AG04450 (cell line): ENCODE measurements at regions of chr2 and their contacts with region 1.

Region 1: GRCh38 chr2:119659601-119660342 is 19.2 kb upstream of the TMEM177 start:
- DNase-seq: no peak
- H3K4me3 ChIP-seq: no peak overlapping the region
- H3K27ac ChIP-seq: no peak overlapping the region
- H3K27me3 ChIP-seq: peaks cover 13% of the 10 kb centered on the region
- CTCF ChIP-seq: peak; percentile 91

Region 2: GRCh38 chr2:119647440-119648169 is 12.2 kb before region 1 on chr2:
- CTCF ChIA-PET with region 1: interaction called, 52 read pairs
- POLR2A ChIA-PET with region 1: no interaction called
- DNase-seq: no peak
- H3K4me3 ChIP-seq: no peak overlapping the region
- H3K27ac ChIP-seq: no peak overlapping the region
- H3K27me3 ChIP-seq: peaks cover 7% of the 10 kb centered on the region
- CTCF ChIP-seq: no peak

Region 3: GRCh38 chr2:119671016-119671415 is 11.2 kb after region 1 on chr2:
- CTCF ChIA-PET with region 1: interaction called, 12 read pairs
- POLR2A ChIA-PET with region 1: no interaction called
- DNase-seq: no peak
- H3K4me3 ChIP-seq: no peak overlapping the region
- H3K27ac ChIP-seq: no peak overlapping the region
- H3K27me3 ChIP-seq: peaks cover 15% of the 10 kb centered on the region
- CTCF ChIP-seq: no peak

Region 4: GRCh38 chr2:119730671-119731193 is 71.0 kb after region 1 on chr2:
- CTCF ChIA-PET with region 1: no interaction called
- POLR2A ChIA-PET with region 1: no interaction called
- DNase-seq: no peak
- H3K4me3 ChIP-seq: no peak overlapping the region
- H3K27ac ChIP-seq: no peak overlapping the region
- H3K27me3 ChIP-seq: peaks cover 30% of the 10 kb centered on the region
- CTCF ChIP-seq: no peak